ENCODE measurements at regions of chr3 and their contacts with region 1.

Region 1: DNA sequence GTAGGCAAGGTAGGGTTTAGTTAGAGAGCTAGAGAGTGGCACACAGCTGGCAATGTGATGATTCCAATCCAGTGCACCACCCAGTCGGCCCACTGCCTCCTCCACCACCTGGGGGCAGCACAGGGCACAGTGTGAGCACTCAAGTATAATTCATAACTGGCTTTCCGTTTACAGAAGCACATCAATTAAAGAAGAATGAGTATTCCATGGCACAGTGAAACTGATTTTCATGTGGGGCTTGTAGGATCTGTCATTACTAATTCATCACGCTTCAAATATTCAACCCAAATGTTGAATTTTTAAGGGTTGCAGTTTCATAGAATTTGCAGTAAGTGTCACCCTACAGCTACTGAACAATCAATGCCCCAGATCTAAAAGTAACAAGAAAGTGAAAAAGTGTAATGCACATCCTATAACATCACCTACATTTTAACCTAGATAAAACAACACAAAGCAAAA is 149.9 kb downstream of the IGSF11 start:
- DNase-seq: peak; percentile 54 to 76 (median 64)
- H3K4me3 ChIP-seq: no peak overlapping the region
- H3K4me3 Mint-ChIP-seq: no peak overlapping the region
- H3K27ac ChIP-seq: no peak overlapping the region
- H3K27ac Mint-ChIP-seq: no peak overlapping the region
- H3K4me1 ChIP-seq: no peaks in the 10 kb centered on the region
- H3K4me1 Mint-ChIP-seq: peaks cover 0 to 5% (median 4%) of the 10 kb centered on the region in 3 donors
- H3K27me3 ChIP-seq: no peaks in the 10 kb centered on the region
- H3K27me3 Mint-ChIP-seq: peaks cover 6 to 47% of the 10 kb centered on the region in 2 donors

Region 2: GRCh38 chr3:118792191-118792590 is 92.6 kb before region 1 on chr3:
- CTCF ChIA-PET with region 1: no interaction called
- POLR2A ChIA-PET with region 1: no interaction called
- DNase-seq: no peak
- H3K4me3 ChIP-seq: no peak overlapping the region
- H3K4me3 Mint-ChIP-seq: no peak overlapping the region
- H3K27ac ChIP-seq: no peak overlapping the region
- H3K27ac Mint-ChIP-seq: no peak overlapping the region
- H3K4me1 ChIP-seq: no peaks in the 10 kb centered on the region
- H3K4me1 Mint-ChIP-seq: no peaks in the 10 kb centered on the region
- H3K27me3 ChIP-seq: no peaks in the 10 kb centered on the region
- H3K27me3 Mint-ChIP-seq: peaks cover 2 to 11% of the 10 kb centered on the region in 2 donors

Region 3: DNA sequence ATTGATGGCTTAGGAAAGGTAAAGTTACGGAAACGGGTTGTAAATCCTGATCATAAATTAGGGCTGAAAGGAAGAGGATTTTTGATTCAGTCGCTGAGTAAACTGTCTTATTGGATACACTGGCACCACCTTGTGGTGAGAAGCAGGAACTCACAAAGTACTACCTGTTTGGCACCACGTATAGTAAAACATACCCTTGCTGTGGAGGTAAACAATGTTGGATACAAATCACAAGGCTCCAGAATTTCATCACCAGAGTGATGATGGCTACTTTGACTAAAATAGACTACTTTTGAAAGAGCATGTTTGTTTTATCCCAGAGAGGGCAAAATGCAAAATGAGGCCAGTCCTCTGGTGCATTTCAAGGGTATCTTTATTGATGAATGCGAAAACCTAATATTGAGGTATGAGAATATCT is 67.0 kb before region 1 on chr3:
- CTCF ChIA-PET with region 1: no interaction called
- POLR2A ChIA-PET with region 1: no interaction called
- DNase-seq: peak in 1 of 5 donors; percentile 18
- H3K4me3 ChIP-seq: no peak overlapping the region
- H3K4me3 Mint-ChIP-seq: no peak overlapping the region
- H3K27ac ChIP-seq: no peak overlapping the region
- H3K27ac Mint-ChIP-seq: no peak overlapping the region
- H3K4me1 ChIP-seq: no peaks in the 10 kb centered on the region
- H3K4me1 Mint-ChIP-seq: peaks cover 0 to 4% (median 0%) of the 10 kb centered on the region in 3 donors
- H3K27me3 ChIP-seq: no peaks in the 10 kb centered on the region
- H3K27me3 Mint-ChIP-seq: peaks cover 2 to 12% of the 10 kb centered on the region in 2 donors

Region 4: GRCh38 chr3:118927449-118927848 is 42.7 kb after region 1 on chr3:
- CTCF ChIA-PET with region 1: no interaction called
- POLR2A ChIA-PET with region 1: no interaction called
- DNase-seq: no peak
- H3K4me3 ChIP-seq: no peak overlapping the region
- H3K4me3 Mint-ChIP-seq: no peak overlapping the region
- H3K27ac ChIP-seq: no peak overlapping the region
- H3K27ac Mint-ChIP-seq: no peak overlapping the region
- H3K4me1 ChIP-seq: no peaks in the 10 kb centered on the region
- H3K4me1 Mint-ChIP-seq: no peaks in the 10 kb centered on the region
- H3K27me3 ChIP-seq: no peaks in the 10 kb centered on the region
- H3K27me3 Mint-ChIP-seq: peaks cover 3 to 8% of the 10 kb centered on the region in 2 donors

Region 5: DNA sequence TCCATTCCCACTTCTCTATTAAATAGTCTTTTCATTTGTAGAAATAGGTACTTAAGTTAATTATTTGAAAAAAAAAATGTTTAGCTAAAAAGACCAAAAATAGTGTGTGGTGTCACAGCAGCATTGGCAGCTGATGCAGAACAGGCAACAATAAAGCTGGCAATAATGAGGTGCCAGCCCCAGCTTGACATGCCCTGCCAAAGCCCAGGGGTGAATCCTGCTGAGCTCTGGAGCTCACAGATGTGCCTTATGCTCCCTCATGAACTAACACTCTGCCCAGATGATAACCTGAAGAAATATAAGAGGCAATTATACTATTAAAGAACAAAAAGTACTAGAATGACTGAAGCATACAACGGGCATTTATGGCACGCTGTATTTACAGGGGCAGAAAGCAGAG is 86.0 kb after region 1 on chr3:
- CTCF ChIA-PET with region 1: no interaction called
- POLR2A ChIA-PET with region 1: no interaction called
- DNase-seq: no peak
- H3K4me3 ChIP-seq: no peak overlapping the region
- H3K4me3 Mint-ChIP-seq: no peak overlapping the region
- H3K27ac ChIP-seq: no peak overlapping the region
- H3K27ac Mint-ChIP-seq: no peak overlapping the region
- H3K4me1 ChIP-seq: no peaks in the 10 kb centered on the region
- H3K4me1 Mint-ChIP-seq: peaks cover 0 to 7% (median 0%) of the 10 kb centered on the region in 3 donors
- H3K27me3 ChIP-seq: no peaks in the 10 kb centered on the region
- H3K27me3 Mint-ChIP-seq: peaks cover 0 to 10% of the 10 kb centered on the region in 2 donors

Region 6: GRCh38 chr3:119034256-119035013 is 149.7 kb after region 1 on chr3 and contains the start of gene IGSF11:
- CTCF ChIA-PET with region 1: interaction called, 117 read pairs
- POLR2A ChIA-PET with region 1: no interaction called
- DNase-seq: peak; percentile 4 to 73 (median 55)
- H3K4me3 ChIP-seq: peak within 1 kb of the TSS; percentile 46
- H3K4me3 Mint-ChIP-seq: peak within 1 kb of the TSS; percentile 80 to 88 (median 83)
- H3K27ac ChIP-seq: no peak within 1 kb of the TSS
- H3K27ac Mint-ChIP-seq: no peak within 1 kb of the TSS
- H3K4me1 ChIP-seq: no peaks in the 10 kb centered on the region
- H3K4me1 Mint-ChIP-seq: peaks cover 7 to 13% (median 11%) of the 10 kb centered on the region in 3 donors
- H3K27me3 ChIP-seq: peaks cover 2% of the 10 kb centered on the region
- H3K27me3 Mint-ChIP-seq: peaks cover 25 to 61% of the 10 kb centered on the region in 2 donors
- total RNA-seq, gene IGSF11: 0.27 TPM in 1 of 2 experiments, not detected in the other

Region 7: DNA sequence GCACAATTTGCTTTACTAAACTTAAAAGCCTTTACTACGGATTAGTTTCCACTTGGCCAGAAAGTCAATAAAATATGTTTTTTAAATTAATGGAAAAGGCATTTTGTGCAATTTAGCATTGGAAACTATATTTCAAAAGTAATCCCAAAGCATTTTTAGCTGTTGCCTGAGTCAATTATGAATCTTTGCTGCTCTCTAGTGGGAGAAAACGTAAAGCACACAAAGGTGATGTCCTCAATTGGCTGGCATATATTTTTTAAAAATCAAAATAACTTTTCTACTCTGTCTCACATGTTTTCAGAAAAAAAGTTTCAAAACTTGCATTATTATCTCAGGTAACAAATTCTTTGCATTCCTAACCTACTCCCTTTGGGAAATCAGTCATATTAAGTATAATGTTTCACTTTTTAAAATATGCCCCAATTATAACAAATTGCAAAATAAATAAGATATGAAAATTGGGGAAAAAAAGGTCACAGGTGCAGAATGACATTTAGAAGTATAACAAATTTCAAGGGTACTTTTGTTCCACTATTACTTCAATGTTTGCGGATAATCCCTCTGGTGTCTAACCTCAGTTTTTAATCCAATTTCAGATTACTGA is 213.9 kb after region 1 on chr3:
- CTCF ChIA-PET with region 1: interaction called, 50 read pairs
- POLR2A ChIA-PET with region 1: no interaction called
- DNase-seq: peak in 2 of 5 donors; percentile 11 to 48
- H3K4me3 ChIP-seq: no peak overlapping the region
- H3K4me3 Mint-ChIP-seq: no peak overlapping the region
- H3K27ac ChIP-seq: no peak overlapping the region
- H3K27ac Mint-ChIP-seq: no peak overlapping the region
- H3K4me1 ChIP-seq: no peaks in the 10 kb centered on the region
- H3K4me1 Mint-ChIP-seq: no peaks in the 10 kb centered on the region
- H3K27me3 ChIP-seq: no peaks in the 10 kb centered on the region
- H3K27me3 Mint-ChIP-seq: no peaks in the 10 kb centered on the region

Region 8: DNA sequence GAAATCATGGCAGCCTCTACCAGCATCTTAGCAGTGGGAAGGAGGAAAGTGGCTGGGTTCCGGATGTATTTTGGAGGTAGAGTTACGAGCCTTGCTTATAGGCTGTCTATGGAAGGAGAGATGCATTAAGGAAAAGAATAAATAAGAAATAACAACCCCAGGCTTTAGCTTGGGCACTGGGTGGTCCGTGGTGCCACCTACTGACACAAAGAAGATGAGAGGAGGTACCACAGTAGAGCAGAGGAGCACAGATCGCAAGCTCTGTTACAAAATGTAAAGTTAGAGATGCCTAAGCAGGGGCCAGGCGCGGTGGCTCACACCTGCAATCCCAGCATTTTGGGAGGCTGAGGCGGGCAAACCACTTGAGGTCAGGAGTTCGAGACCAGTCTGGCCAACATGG is 503.8 kb after region 1 on chr3:
- CTCF ChIA-PET with region 1: interaction called, 26 read pairs
- POLR2A ChIA-PET with region 1: no interaction called
- DNase-seq: no peak
- H3K4me3 ChIP-seq: no peak overlapping the region
- H3K4me3 Mint-ChIP-seq: no peak overlapping the region
- H3K27ac ChIP-seq: no peak overlapping the region
- H3K27ac Mint-ChIP-seq: peak overlapping the region in 2 of 8 donors; percentile 38 to 64
- H3K4me1 ChIP-seq: no peaks in the 10 kb centered on the region
- H3K4me1 Mint-ChIP-seq: no peaks in the 10 kb centered on the region
- H3K27me3 ChIP-seq: no peaks in the 10 kb centered on the region
- H3K27me3 Mint-ChIP-seq: no peaks in the 10 kb centered on the region